Sciatic nerve (tissue), 2 donors: ENCODE measurements at regions of chr2 and their contacts with region 1.

Region 1: DNA sequence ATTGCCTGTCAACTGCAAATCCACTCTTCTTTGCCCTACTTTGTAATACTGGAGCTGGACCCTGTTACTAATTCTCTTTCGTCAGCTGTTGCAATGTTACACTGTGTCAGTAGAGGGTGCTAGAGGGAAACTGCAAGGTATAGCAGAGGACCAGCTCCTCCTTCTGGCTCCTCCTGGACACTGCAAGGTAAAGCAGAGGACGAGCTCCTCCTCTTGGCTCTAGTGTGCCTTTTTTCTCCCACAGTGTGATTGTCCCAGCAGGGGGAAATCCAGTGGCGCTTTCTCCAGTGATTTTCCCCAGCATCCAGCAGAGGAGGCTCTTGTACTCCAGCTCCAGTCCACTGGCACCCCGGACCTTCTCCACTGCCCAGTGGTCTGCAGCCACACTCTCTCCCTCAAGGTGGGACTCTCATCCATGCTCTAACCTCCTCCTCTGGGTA is 95.6 kb downstream of the CAPN13 start:
- DNase-seq: peak; percentile 79
- ATAC-seq: peak; percentile 67

Region 2: DNA sequence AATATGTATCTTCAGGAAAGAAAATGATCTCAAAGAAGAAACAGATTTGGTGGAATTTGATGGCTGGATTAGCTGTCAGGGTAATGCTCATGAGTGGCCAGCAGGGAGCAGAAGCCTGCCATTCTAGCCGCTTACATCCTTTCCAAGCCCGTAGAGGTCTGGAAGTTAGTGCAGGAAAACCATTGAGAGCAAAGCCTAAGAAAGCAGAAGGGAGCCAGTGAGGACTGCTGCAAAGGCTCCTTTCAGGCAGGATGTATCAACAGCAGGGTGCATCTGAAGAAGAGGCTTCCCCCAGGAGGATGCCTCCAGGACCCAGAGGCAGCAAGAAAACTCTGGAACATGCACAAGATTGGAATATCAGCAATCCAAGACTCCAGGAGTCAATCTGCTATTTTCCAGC is 503.2 kb before region 1 on chr2:
- intact Hi-C with region 1: loop called (anchors 5 kb)
- DNase-seq: peak; percentile 77
- ATAC-seq: peak; percentile 94

Region 3: GRCh38 chr2:30862054-30862651 is 150.5 kb after region 1 on chr2:
- intact Hi-C with region 1: loop called (anchors 10 kb)
- DNase-seq: peak; percentile 64
- ATAC-seq: no peak